ENCODE measurements at regions of chr13 and their contacts with region 1.

Region 1: GRCh38 chr13:78383071-78383484 is 220.3 kb downstream of the POU4F1 start:
- DNase-seq: no peak
- H3K4me3 ChIP-seq: no peak overlapping the region
- H3K27ac ChIP-seq: no peak overlapping the region
- H3K4me1 ChIP-seq: no peaks in the 10 kb centered on the region
- H3K27me3 ChIP-seq: no peaks in the 10 kb centered on the region
- CTCF ChIP-seq: no peak
- POLR2A ChIP-seq: no peak

Region 2: DNA sequence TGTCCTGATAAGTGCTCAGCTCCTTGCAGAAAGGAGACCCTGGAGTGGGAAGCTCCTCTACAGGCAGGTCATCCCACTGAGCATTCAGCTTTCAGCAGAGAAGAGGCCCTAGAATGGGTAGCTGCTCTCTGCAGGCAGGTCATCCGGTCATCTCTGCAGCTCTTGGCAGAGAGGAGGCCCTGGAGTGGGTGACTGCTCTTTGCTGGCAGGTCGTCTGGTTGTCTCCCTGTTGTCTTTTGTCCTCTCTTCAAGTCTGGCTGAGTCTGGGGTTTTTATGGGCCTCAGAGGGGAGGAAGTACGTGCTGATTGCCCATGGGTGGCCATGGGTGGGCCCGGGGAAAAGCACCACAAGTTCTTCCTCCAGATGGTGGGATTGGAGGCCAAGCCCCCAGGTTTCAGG is 214.1 kb before region 1 on chr13:
- intact Hi-C with region 1: no loop called
- DNase-seq: no peak
- H3K4me3 ChIP-seq: no peak overlapping the region
- H3K27ac ChIP-seq: no peak overlapping the region
- H3K4me1 ChIP-seq: no peaks in the 10 kb centered on the region
- H3K27me3 ChIP-seq: no peaks in the 10 kb centered on the region
- CTCF ChIP-seq: no peak
- POLR2A ChIP-seq: no peak

Region 3: DNA sequence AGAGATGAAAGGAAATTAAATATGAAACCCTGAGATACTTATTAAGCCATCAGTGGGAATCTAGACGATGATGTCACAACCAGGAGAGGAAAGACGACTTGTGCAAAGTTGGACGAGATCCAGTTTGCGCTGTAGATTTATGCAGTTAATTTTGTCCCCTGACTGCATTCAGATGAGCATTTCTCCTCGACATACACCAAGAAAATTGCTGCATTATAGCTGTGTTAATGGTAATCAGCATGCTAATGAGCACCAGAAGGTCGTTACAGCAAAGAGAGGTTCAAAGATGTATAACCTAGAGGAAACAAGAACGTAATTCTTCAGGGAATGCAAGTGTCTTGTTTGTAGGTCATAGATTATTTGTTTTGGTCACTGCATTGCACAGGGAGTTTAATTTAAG is 651.3 kb after region 1 on chr13:
- intact Hi-C with region 1: loop called (anchors 5 kb)
- DNase-seq: no peak
- H3K4me3 ChIP-seq: no peak overlapping the region
- H3K27ac ChIP-seq: no peak overlapping the region
- H3K4me1 ChIP-seq: no peaks in the 10 kb centered on the region
- H3K27me3 ChIP-seq: no peaks in the 10 kb centered on the region
- CTCF ChIP-seq: no peak
- POLR2A ChIP-seq: no peak